Naive thymus-derived CD4-positive, alpha-beta T cell (primary cell): ENCODE measurements at regions of chr17 and their contacts with region 1.

Region 1: DNA sequence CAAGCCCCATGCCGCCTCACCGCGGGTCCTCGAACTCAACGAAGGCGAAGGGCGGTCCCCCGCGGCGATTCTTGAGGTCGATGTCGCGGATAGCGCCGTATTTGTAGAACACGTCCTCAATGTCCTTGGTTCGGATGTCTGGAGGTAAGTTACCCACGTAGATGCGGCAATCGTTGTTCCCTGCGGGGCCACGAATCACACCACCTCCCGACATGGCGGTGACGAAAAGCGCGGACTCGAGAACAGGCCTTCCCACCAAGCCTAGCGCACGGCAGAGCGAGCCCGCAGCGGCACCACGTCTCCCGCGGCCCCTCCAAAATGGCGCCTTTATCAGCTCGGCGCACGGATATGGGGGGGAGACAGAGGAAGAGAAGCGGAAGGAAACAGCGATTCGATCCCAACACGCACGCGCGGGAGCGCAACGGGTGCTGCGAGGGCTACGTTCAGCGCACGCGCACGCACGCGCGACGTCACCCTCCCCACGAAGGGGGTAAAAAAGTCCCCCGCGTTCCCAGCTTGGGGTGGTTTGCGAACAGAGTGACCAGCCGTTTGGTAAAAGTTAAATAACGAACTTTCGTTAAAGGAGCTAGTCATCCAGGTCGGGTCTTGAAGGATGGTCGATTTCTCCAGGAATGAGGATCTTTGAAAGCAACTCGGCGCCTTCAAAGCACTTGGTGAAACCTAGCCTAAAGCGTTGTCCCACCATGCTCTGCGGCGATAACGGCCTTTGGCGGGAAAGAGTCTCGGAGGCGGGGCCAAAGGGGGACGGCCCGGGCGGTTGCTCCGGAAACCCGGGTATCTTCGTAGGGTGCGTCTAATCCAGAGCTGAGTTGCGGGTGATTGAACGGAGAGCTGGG is at the start of gene SRSF1:
- DNase-seq: peak; percentile 95 to 99 (median 98)
- ATAC-seq: peak; percentile 92
- H3K4me3 ChIP-seq: peak within 1 kb of the TSS; percentile 99
- H3K4me3 Mint-ChIP-seq: peak within 1 kb of the TSS; percentile 96 to 100 (median 99)
- H3K27ac ChIP-seq: peak within 1 kb of the TSS; percentile 93
- H3K27ac Mint-ChIP-seq: peak within 1 kb of the TSS; percentile 99 to 100 (median 99)
- H3K4me1 ChIP-seq: peaks cover 31 to 32% of the 10 kb centered on the region in 2 donors
- H3K4me1 Mint-ChIP-seq: peaks cover 33 to 60% (median 54%) of the 10 kb centered on the region in 7 donors
- H3K27me3 ChIP-seq: no peaks in the 10 kb centered on the region
- H3K27me3 Mint-ChIP-seq: peaks cover 0 to 3% (median 0%) of the 10 kb centered on the region in 5 donors
- total RNA-seq, gene SRSF1: 115 to 362 (median 249) TPM

Region 2: DNA sequence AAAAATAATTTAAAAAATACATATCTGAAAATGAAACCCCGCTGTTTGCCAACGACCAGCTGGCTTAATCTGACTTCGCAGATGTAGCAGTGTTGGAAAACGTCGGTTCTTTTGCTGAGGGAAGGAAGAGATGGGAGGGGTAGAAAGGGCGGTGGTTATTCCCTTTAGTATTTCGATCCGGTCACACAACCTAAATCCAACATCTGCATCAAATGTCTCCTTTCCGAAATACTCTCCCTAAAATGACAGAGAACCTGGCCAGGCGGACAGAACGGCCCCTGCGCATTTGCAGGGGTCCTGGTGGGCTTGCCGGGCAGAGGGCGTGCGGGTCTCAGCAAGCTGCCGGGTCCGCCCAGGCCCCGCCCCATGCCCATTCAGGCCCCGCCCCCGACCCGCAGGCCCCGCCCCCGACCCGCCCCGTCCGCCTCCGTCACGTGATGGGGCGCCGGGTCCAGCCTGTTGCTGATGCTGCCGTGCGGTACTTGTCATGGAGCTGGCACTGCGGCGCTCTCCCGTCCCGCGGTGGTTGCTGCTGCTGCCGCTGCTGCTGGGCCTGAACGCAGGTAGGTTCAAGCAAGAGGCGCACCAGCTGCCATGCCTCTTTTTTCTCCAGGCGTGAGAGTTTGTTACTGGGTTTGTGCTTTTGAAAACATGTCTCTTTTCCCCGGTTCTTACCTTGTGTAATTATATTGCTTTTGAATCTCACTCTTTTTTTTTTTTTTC is 1029.3 kb before region 1 on chr17 and contains the start of gene SCPEP1:
- CTCF ChIA-PET with region 1: no interaction called
- POLR2A ChIA-PET with region 1: no interaction called
- intact Hi-C with region 1: loop called in 1 of 2 experiments (anchors 5 kb)
- DNase-seq: peak; percentile 65 to 82 (median 76)
- ATAC-seq: peak; percentile 99
- H3K4me3 ChIP-seq: peak within 1 kb of the TSS; percentile 92
- H3K4me3 Mint-ChIP-seq: peak within 1 kb of the TSS; percentile 85 to 96 (median 93)
- H3K27ac ChIP-seq: peak within 1 kb of the TSS; percentile 63
- H3K27ac Mint-ChIP-seq: peak within 1 kb of the TSS; percentile 70 to 98 (median 86)
- H3K4me1 ChIP-seq: peaks cover 10 to 12% of the 10 kb centered on the region in 2 donors
- H3K4me1 Mint-ChIP-seq: peaks cover 11 to 33% (median 24%) of the 10 kb centered on the region in 7 donors
- H3K27me3 ChIP-seq: no peaks in the 10 kb centered on the region
- H3K27me3 Mint-ChIP-seq: peaks cover 0 to 32% (median 0%) of the 10 kb centered on the region in 5 donors
- total RNA-seq, gene SCPEP1: 8.4 to 81.6 (median 27.1) TPM

Region 3: DNA sequence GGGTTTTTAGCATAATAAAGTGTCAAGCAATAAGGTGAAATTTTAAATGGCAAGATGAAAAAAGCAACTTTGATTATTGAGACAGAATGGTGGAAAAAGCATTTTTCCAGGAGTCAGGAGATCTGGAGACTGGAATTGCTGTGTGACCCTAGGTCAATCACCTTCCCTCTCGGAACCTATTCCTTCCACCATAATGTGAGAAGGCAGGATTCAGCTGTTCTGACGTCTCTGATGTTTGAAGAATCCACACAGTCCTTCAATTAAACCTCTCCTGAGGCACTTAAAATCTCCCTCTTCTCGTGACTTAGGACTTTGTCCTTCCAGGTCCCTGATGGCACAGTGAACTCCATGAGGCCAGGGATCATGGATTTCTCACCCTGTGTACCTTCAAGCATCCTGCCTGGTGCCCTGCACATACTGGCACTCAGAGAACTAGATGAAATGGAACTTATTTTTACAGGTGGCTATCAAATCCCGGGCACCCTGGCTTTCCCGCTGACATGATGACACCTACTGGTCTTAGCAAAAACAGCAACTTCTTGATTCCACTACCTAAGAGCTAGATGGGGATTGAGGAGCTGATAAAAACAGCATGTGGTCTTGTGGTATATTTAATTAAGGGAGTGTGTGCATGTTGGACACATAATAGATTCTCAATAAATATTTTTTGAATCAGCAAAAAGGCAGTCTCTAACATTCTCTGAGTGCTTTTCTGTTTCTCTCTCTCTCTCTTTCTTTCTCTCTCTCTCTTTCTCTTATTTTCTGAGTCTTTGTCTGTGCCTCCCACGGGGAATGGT is 259.7 kb before region 1 on chr17:
- CTCF ChIA-PET with region 1: no interaction called
- POLR2A ChIA-PET with region 1: no interaction called
- intact Hi-C with region 1: no loop called
- DNase-seq: peak in 8 of 9 donors; percentile 18 to 65 (median 50)
- ATAC-seq: peak; percentile 66
- H3K4me3 ChIP-seq: no peak overlapping the region
- H3K4me3 Mint-ChIP-seq: no peak overlapping the region
- H3K27ac ChIP-seq: no peak overlapping the region
- H3K27ac Mint-ChIP-seq: peak overlapping the region in 1 of 9 donors; percentile 2
- H3K4me1 ChIP-seq: no peaks in the 10 kb centered on the region
- H3K4me1 Mint-ChIP-seq: peaks cover 0 to 6% (median 0%) of the 10 kb centered on the region in 7 donors
- H3K27me3 ChIP-seq: no peaks in the 10 kb centered on the region
- H3K27me3 Mint-ChIP-seq: peaks cover 0 to 15% (median 4%) of the 10 kb centered on the region in 5 donors

Region 4: GRCh38 chr17:57962279-57963148 is 44.6 kb before region 1 on chr17:
- CTCF ChIA-PET with region 1: no interaction called
- POLR2A ChIA-PET with region 1: no interaction called
- intact Hi-C with region 1: no loop called
- DNase-seq: no peak
- ATAC-seq: no peak
- H3K4me3 ChIP-seq: no peak overlapping the region
- H3K4me3 Mint-ChIP-seq: no peak overlapping the region
- H3K27ac ChIP-seq: no peak overlapping the region
- H3K27ac Mint-ChIP-seq: peak overlapping the region in 1 of 9 donors; percentile 17
- H3K4me1 ChIP-seq: no peaks in the 10 kb centered on the region
- H3K4me1 Mint-ChIP-seq: peaks cover 0 to 4% (median 3%) of the 10 kb centered on the region in 7 donors
- H3K27me3 ChIP-seq: no peaks in the 10 kb centered on the region
- H3K27me3 Mint-ChIP-seq: peaks cover 0 to 46% (median 4%) of the 10 kb centered on the region in 5 donors

Region 5: GRCh38 chr17:57995076-57995956 is 11.8 kb before region 1 on chr17:
- CTCF ChIA-PET with region 1: interaction called, 45 read pairs
- POLR2A ChIA-PET with region 1: interaction called, 113 read pairs
- intact Hi-C with region 1: loop called in 1 of 2 experiments (anchors 1 kb)
- DNase-seq: peak in 8 of 9 donors; percentile 27 to 66 (median 52)
- ATAC-seq: peak; percentile 91
- H3K4me3 ChIP-seq: no peak overlapping the region
- H3K4me3 Mint-ChIP-seq: peak overlapping the region in 4 of 10 donors; percentile 1 to 30 (median 12)
- H3K27ac ChIP-seq: peak overlapping the region; percentile 56
- H3K27ac Mint-ChIP-seq: peak overlapping the region; percentile 10 to 90 (median 70)
- H3K4me1 ChIP-seq: peaks cover 0 to 19% of the 10 kb centered on the region in 2 donors
- H3K4me1 Mint-ChIP-seq: peaks cover 16 to 61% (median 52%) of the 10 kb centered on the region in 7 donors
- H3K27me3 ChIP-seq: no peaks in the 10 kb centered on the region
- H3K27me3 Mint-ChIP-seq: no peaks in the 10 kb centered on the region

Region 6: GRCh38 chr17:58156839-58157803 is 150.0 kb after region 1 on chr17:
- CTCF ChIA-PET with region 1: no interaction called
- POLR2A ChIA-PET with region 1: interaction called, 11 read pairs
- intact Hi-C with region 1: loop called (anchors 1 to 2 kb)
- DNase-seq: peak; percentile 31 to 61 (median 55)
- ATAC-seq: peak; percentile 74
- H3K4me3 ChIP-seq: peak overlapping the region; percentile 56
- H3K4me3 Mint-ChIP-seq: peak overlapping the region; percentile 90 to 97 (median 94)
- H3K27ac ChIP-seq: peak overlapping the region; percentile 88
- H3K27ac Mint-ChIP-seq: peak overlapping the region; percentile 86 to 98 (median 93)
- H3K4me1 ChIP-seq: peaks cover 40 to 48% of the 10 kb centered on the region in 2 donors
- H3K4me1 Mint-ChIP-seq: peaks cover 41 to 86% (median 73%) of the 10 kb centered on the region in 7 donors
- H3K27me3 ChIP-seq: no peaks in the 10 kb centered on the region
- H3K27me3 Mint-ChIP-seq: peaks cover 0 to 29% (median 0%) of the 10 kb centered on the region in 5 donors

Region 7: DNA sequence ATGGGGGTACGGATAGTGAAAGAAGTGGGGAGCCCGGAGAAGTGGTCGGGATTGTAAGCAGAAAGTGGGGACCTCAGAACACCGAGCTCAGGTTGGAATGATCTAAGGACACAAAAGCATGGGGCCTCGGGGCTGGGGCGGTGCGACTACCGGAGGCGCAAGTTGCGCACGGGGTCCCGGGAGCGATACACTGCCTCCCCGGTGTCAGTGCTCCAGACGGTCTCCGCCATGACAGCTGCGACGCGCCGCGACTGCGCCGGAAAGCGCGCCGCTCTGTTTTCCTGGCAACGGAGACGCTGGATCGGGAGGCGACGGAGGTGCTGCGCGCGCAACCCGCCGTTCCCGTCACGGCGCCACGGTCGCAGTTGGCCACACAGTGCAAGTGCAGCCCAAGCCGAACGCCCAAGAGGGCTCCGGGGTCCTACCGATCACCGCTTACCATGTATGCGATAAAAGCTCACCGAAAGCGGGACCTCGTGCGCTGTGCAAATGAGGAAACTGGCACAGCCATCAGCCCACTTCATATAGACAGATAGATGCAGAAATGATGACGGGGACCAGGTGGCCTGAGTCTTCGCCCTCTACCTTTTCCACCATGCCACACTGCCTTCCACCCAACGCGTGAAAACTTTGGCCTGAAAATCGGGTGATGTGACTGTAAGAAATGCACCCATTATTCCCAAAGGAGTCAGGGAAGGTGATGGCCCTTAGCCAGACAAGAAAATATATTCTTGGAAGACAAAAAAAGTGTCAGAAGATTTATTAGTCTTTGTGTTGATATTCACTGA is 212.0 kb after region 1 on chr17 and contains the start of gene MKS1:
- CTCF ChIA-PET with region 1: no interaction called
- POLR2A ChIA-PET with region 1: interaction called, 5 read pairs
- intact Hi-C with region 1: loop called (anchors 1 kb)
- DNase-seq: peak; percentile 90 to 96 (median 94)
- ATAC-seq: peak; percentile 98
- H3K4me3 ChIP-seq: peak within 1 kb of the TSS; percentile 68
- H3K4me3 Mint-ChIP-seq: peak within 1 kb of the TSS; percentile 86 to 96 (median 94)
- H3K27ac ChIP-seq: peak within 1 kb of the TSS; percentile 77
- H3K27ac Mint-ChIP-seq: peak within 1 kb of the TSS; percentile 92 to 98 (median 97)
- H3K4me1 ChIP-seq: peaks cover 8 to 9% of the 10 kb centered on the region in 2 donors
- H3K4me1 Mint-ChIP-seq: peaks cover 7 to 33% (median 23%) of the 10 kb centered on the region in 7 donors
- H3K27me3 ChIP-seq: no peaks in the 10 kb centered on the region
- H3K27me3 Mint-ChIP-seq: peaks cover 0 to 18% (median 0%) of the 10 kb centered on the region in 5 donors
- total RNA-seq, gene MKS1: 10.0 to 29.1 (median 19.7) TPM

Region 8: DNA sequence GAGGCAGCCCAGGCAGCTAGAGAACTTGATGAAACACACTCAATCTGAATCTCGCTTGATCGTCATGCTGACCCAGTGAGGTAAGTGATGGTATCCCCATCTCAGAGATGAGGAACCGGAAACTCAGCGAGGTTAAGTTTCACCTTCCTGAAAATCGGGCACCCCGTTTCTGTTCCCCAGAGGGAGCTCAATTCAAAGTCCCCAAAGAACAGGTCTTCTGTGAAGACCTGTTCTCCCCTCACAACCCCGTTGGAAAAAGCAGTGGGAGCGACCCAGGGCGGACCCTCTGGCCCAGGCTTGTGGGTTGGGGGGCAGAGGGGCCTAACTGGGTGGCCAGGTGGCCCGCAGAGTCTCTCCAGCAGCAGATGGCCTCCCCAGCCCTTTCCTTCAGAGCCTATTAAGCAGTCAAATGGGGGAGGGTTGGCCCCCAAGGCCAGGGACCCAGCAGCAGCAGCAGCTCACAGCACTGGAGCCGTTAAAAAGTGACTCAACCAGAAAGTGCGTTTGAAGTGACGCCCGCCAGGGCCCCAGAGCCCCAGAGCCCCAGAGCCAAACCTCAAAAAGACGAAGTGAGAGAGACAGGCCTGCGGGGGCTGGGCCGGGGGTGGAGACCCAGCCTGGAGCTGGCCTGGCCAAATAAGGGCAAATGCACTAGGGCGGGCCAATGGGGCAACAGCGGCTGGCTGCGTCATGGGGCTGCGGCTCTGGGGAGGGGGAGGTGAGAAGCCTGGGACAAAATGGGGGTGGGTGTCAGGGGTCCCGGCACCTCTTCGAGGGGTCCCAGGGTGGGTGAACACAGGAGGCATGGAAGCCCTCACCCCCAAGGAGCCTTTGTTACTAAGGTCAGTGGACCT is 330.7 kb after region 1 on chr17:
- CTCF ChIA-PET with region 1: no interaction called
- POLR2A ChIA-PET with region 1: interaction called, 8 read pairs
- intact Hi-C with region 1: loop called in 1 of 2 experiments (anchors 5 kb)
- DNase-seq: peak; percentile 73 to 93 (median 85)
- ATAC-seq: peak; percentile 88
- H3K4me3 ChIP-seq: peak overlapping the region; percentile 98
- H3K4me3 Mint-ChIP-seq: peak overlapping the region; percentile 86 to 100 (median 97)
- H3K27ac ChIP-seq: peak overlapping the region; percentile 98
- H3K27ac Mint-ChIP-seq: peak overlapping the region; percentile 89 to 100 (median 95)
- H3K4me1 ChIP-seq: peaks cover 59 to 77% of the 10 kb centered on the region in 2 donors
- H3K4me1 Mint-ChIP-seq: peaks cover 52 to 90% (median 65%) of the 10 kb centered on the region in 7 donors
- H3K27me3 ChIP-seq: no peaks in the 10 kb centered on the region
- H3K27me3 Mint-ChIP-seq: no peaks in the 10 kb centered on the region